ENCODE measurements at regions of chr2 and their contacts with region 1.

Region 1: GRCh38 chr2:158753641-158754611 is 41.2 kb upstream of the DAPL1 start:
- DNase-seq: peak; percentile 21
- H3K4me3 Mint-ChIP-seq: no peak overlapping the region
- H3K27ac Mint-ChIP-seq: no peak overlapping the region
- H3K4me1 Mint-ChIP-seq: no peaks in the 10 kb centered on the region
- H3K27me3 Mint-ChIP-seq: peaks cover 6% of the 10 kb centered on the region

Region 2: GRCh38 chr2:158034199-158034866 is 719.6 kb before region 1 on chr2:
- CTCF ChIA-PET with region 1: interaction called, 19 read pairs
- POLR2A ChIA-PET with region 1: no interaction called
- intact Hi-C with region 1: no loop called
- DNase-seq: no peak
- H3K4me3 Mint-ChIP-seq: no peak overlapping the region
- H3K27ac Mint-ChIP-seq: no peak overlapping the region
- H3K4me1 Mint-ChIP-seq: no peaks in the 10 kb centered on the region
- H3K27me3 Mint-ChIP-seq: peaks cover 15% of the 10 kb centered on the region

Region 3: GRCh38 chr2:158179660-158180059 is 574.3 kb before region 1 on chr2:
- CTCF ChIA-PET with region 1: interaction called, 22 read pairs
- POLR2A ChIA-PET with region 1: no interaction called
- intact Hi-C with region 1: loop called (anchors 2 kb)
- DNase-seq: no peak
- H3K4me3 Mint-ChIP-seq: no peak overlapping the region
- H3K27ac Mint-ChIP-seq: no peak overlapping the region
- H3K4me1 Mint-ChIP-seq: no peaks in the 10 kb centered on the region
- H3K27me3 Mint-ChIP-seq: peaks cover 24% of the 10 kb centered on the region

Region 4: DNA sequence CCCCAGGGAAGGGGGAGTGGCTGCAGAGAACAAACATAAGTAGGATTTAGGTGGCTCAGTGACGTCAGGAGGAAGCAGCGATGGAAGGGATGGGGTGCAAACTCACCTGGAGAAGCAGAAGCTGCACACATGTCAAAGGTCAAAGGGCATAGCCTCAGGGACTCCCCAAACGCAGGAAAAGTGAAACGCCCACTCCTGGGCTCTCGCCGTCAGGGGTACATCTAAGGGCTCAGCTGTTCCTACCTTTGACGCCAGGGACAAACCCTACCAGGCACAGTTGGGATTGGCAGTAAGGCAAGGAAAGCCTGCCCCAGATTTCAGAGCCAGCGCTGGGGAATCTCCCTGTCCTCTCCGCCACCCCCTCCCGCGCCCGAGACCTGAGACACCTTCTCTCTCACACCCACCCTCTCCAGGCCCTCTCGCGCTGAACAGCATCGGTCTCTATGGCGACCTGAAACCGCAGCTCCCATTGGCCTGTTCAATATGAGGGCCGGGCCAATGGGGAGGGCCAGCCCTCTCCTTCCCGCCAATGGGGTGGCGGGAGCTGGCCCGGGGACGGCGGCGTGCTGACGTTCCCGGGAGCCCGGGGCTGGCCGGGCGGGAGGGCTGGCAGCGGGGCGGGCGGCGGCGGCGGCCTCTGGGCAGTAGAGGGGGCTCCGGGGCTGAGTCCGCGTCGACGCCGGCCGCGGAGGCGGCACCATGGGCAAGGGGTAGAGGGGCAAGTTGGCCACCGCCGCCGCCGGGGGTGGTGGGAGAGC is 297.4 kb before region 1 on chr2 and contains the starts of genes CCDC148 and PKP4:
- CTCF ChIA-PET with region 1: interaction called, 4 read pairs
- POLR2A ChIA-PET with region 1: no interaction called
- intact Hi-C with region 1: loop called (anchors 5 kb)
- DNase-seq: peak; percentile 94
- H3K4me3 Mint-ChIP-seq: peak within 1 kb of the TSS; percentile 93
- H3K27ac Mint-ChIP-seq: peak within 1 kb of the TSS; percentile 72
- H3K4me1 Mint-ChIP-seq: peaks cover 28% of the 10 kb centered on the region
- H3K27me3 Mint-ChIP-seq: no peaks in the 10 kb centered on the region
- total RNA-seq, gene CCDC148: 0.29 TPM in 1 of 2 experiments, not detected in the other
- total RNA-seq, gene PKP4: 41.4 to 43.1 TPM

Region 5: DNA sequence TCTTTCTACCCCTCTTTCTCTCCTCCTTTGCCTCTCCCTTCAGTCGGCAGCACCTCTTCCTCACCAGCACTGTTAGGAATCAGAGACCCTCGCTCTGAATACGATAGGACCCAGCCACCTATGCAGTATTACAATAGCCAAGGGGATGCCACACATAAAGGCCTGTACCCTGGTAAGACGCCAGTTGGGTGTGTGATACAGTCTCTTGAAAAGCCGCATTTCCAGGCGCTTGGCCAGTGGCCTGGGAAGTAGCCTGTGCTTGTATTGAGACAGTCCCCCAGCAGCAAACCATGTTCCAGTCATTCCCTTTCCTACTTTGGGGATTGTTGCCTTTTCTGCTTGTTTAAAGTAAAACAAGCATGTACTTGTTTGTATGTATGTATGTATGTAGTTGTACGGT is 77.2 kb before region 1 on chr2:
- CTCF ChIA-PET with region 1: no interaction called
- POLR2A ChIA-PET with region 1: no interaction called
- intact Hi-C with region 1: no loop called
- DNase-seq: no peak
- H3K4me3 Mint-ChIP-seq: no peak overlapping the region
- H3K27ac Mint-ChIP-seq: no peak overlapping the region
- H3K4me1 Mint-ChIP-seq: no peaks in the 10 kb centered on the region
- H3K27me3 Mint-ChIP-seq: no peaks in the 10 kb centered on the region

Region 6: GRCh38 chr2:158740127-158740526 is 13.8 kb before region 1 on chr2:
- CTCF ChIA-PET with region 1: interaction called, 36 read pairs
- POLR2A ChIA-PET with region 1: no interaction called
- intact Hi-C with region 1: no loop called
- DNase-seq: no peak
- H3K4me3 Mint-ChIP-seq: no peak overlapping the region
- H3K27ac Mint-ChIP-seq: no peak overlapping the region
- H3K4me1 Mint-ChIP-seq: no peaks in the 10 kb centered on the region
- H3K27me3 Mint-ChIP-seq: peaks cover 5% of the 10 kb centered on the region

Region 7: GRCh38 chr2:159549234-159549633 is 795.3 kb after region 1 on chr2:
- CTCF ChIA-PET with region 1: no interaction called
- POLR2A ChIA-PET with region 1: no interaction called
- intact Hi-C with region 1: no loop called
- DNase-seq: no peak
- H3K4me3 Mint-ChIP-seq: no peak overlapping the region
- H3K27ac Mint-ChIP-seq: no peak overlapping the region
- H3K4me1 Mint-ChIP-seq: no peaks in the 10 kb centered on the region
- H3K27me3 Mint-ChIP-seq: no peaks in the 10 kb centered on the region